Kidney (tissue), 22 donors: ENCODE measurements at regions of chr10 and their contacts with region 1.

Region 1: DNA sequence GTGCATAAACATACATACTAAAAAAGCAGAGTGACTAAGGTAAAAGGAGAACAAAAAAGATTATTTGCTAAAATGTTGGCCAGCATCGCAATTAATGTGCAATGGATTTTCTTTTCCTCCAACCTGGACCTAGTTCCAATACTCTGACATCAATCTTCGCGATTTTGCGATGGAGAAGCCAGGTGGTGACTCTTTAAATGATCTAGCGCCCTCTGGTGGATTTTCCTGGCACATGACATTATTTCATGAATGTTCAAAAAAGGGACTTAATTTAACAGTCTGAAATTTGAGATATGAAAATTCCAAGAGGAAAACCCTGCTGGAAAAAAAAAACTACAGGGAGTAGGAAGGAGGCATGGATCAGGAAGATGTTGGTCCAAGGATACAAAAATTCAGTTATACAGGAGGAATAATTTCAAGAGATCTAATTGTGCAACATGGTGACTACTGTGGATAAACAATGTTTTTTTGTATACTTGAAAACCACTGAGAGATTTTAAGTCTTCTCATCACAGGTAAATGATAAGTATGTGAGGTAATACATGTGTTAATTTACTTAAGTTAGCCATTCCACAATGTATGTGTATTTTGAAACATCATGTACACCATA is 4.3 kb upstream of the KCNMA1 start:
- DNase-seq: peak in 3 of 5 donors; percentile 73 to 91 (median 84)
- H3K4me3 ChIP-seq: no peak overlapping the region
- H3K27ac ChIP-seq: no peak overlapping the region
- H3K4me1 ChIP-seq: no peaks in the 10 kb centered on the region
- H3K27me3 ChIP-seq: peaks cover 22% of the 10 kb centered on the region
- CTCF ChIP-seq: peak; percentile 89

Region 2: DNA sequence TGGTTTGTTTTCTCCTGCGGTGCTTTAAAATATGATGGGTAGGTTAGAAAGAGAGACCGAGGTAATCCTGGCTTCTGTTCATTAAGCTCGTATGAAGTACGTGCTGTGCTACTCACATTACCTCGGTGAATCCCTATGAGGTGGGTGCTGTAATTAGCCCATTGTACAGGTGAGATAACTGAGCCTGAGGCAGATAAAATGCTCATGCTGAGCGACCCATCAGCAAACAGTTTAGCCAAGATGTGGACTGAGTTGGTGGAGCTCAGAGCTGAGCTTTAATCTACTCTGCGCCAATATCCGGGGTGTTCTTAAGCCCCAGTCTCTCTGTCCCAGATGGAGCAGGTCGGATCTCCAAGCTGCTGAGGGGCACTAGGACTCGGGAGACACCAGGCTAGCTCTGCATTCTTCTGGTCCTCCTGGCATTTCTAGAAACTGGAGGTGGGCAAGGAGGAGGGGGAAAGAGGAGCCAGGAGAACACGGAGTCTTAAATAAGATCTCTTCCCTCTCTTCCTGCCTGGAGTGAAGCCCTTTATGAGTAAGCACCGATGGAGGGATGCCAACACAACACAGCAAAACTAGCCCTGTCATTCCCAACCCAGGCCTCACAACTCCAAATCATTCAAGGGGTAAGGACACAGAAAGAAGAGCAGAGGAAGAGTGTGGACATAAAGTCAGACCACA is 462.7 kb before region 1 on chr10:
- intact Hi-C with region 1: loop called (anchors 5 kb)
- DNase-seq: peak in 1 of 5 donors; percentile 30
- H3K4me3 ChIP-seq: no peak overlapping the region
- H3K27ac ChIP-seq: no peak overlapping the region
- H3K4me1 ChIP-seq: no peaks in the 10 kb centered on the region
- H3K27me3 ChIP-seq: no peaks in the 10 kb centered on the region
- CTCF ChIP-seq: no peak

Region 3: DNA sequence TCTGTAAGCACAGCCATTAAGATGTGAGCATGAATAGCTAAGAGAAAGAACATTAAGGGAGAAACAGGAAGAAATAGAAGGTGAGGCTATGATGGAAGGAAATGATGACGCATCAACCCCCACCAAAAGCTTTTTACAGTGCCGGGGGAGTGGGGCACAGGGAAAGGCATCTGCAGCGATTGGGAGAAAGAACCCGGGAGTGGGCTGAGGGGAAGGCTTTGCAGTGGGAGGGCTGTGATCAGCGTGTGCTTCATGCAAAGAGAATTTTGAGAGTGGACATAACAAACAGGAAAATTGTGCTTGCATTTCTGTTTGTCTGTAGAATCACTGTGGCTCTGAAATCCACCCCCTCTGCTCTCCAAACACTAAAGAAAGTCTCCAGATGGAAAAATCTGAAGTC is 255.1 kb before region 1 on chr10:
- intact Hi-C with region 1: loop called (anchors 10 kb)
- DNase-seq: peak in 1 of 5 donors; percentile 32
- H3K4me3 ChIP-seq: no peak overlapping the region
- H3K27ac ChIP-seq: no peak overlapping the region
- H3K4me1 ChIP-seq: peaks cover 0 to 2% (median 0%) of the 10 kb centered on the region in 3 donors
- H3K27me3 ChIP-seq: no peaks in the 10 kb centered on the region
- CTCF ChIP-seq: no peak